Activated CD4-positive, alpha-beta T cell treated with anti-CD3 and anti-CD28 coated beads for 36 hours (primary cell): ENCODE measurements at regions of chr2 and their contacts with region 1.

Region 1: GRCh38 chr2:113138428-113139322 is 11.3 kb downstream of the IL1RN start:
- DNase-seq: peak; percentile 56
- ATAC-seq: peak; percentile 82
- H3K4me3 Mint-ChIP-seq: no peak overlapping the region
- H3K27ac Mint-ChIP-seq: peak overlapping the region; percentile 71
- H3K4me1 Mint-ChIP-seq: peaks cover 24% of the 10 kb centered on the region
- H3K27me3 Mint-ChIP-seq: no peaks in the 10 kb centered on the region

Region 2: GRCh38 chr2:112757265-112757664 is 381.4 kb before region 1 on chr2:
- CTCF ChIA-PET with region 1: no interaction called
- POLR2A ChIA-PET with region 1: no interaction called
- intact Hi-C with region 1: no loop called
- DNase-seq: peak; percentile 9
- ATAC-seq: no peak
- H3K4me3 Mint-ChIP-seq: no peak overlapping the region
- H3K27ac Mint-ChIP-seq: no peak overlapping the region
- H3K4me1 Mint-ChIP-seq: peaks cover 4% of the 10 kb centered on the region
- H3K27me3 Mint-ChIP-seq: no peaks in the 10 kb centered on the region

Region 3: GRCh38 chr2:113116100-113116958 is 22.3 kb before region 1 on chr2:
- CTCF ChIA-PET with region 1: interaction called, 39 read pairs
- POLR2A ChIA-PET with region 1: no interaction called
- intact Hi-C with region 1: no loop called
- DNase-seq: peak; percentile 37
- ATAC-seq: peak; percentile 16
- H3K4me3 Mint-ChIP-seq: no peak overlapping the region
- H3K27ac Mint-ChIP-seq: peak overlapping the region; percentile 58
- H3K4me1 Mint-ChIP-seq: peaks cover 16% of the 10 kb centered on the region
- H3K27me3 Mint-ChIP-seq: peaks cover 2% of the 10 kb centered on the region

Region 4: DNA sequence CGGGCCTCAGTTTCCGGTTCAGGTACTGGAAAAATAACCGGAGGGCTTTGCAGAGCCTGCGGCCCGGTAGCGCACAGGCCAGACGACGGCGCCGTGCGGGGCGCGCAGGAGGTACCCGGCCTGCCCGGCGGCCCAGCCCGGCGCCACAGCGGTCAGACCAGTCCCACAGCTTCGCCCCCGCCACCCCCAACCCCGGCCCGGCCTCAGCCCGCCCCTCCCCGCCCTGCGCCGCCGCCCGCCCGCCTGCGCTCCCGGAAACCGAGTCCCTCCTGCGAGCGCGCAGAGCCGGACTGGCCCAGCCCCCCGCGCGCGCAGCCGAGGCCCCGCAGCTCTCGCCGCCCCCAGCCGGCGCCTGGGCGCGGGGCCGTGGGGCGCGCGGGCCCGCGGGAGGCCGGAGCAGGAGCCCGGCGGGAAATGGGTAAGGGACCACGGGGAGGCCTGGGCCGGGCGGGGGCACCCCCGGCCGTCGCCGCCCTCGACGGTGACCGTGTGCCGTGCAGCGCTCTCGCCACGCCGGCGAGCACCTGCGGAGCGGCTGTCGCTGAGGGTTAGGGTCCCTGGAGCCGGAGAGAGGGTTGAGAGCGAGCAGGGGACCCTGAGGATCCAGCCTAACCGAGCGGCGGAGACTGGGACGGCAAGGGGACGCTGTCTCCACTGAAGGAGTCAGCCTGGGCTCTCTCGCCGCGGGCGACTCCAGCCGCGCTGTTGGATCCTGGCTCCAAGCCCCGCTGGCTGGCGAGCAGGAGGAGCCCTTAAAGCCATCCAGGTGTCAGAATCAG is 18.6 kb after region 1 on chr2:
- CTCF ChIA-PET with region 1: interaction called, 79 read pairs
- POLR2A ChIA-PET with region 1: no interaction called
- intact Hi-C with region 1: loop called (anchors 1 to 2 kb)
- DNase-seq: peak; percentile 74
- ATAC-seq: peak; percentile 61
- H3K4me3 Mint-ChIP-seq: peak overlapping the region; percentile 82
- H3K27ac Mint-ChIP-seq: peak overlapping the region; percentile 90
- H3K4me1 Mint-ChIP-seq: peaks cover 22% of the 10 kb centered on the region
- H3K27me3 Mint-ChIP-seq: no peaks in the 10 kb centered on the region

Region 5: DNA sequence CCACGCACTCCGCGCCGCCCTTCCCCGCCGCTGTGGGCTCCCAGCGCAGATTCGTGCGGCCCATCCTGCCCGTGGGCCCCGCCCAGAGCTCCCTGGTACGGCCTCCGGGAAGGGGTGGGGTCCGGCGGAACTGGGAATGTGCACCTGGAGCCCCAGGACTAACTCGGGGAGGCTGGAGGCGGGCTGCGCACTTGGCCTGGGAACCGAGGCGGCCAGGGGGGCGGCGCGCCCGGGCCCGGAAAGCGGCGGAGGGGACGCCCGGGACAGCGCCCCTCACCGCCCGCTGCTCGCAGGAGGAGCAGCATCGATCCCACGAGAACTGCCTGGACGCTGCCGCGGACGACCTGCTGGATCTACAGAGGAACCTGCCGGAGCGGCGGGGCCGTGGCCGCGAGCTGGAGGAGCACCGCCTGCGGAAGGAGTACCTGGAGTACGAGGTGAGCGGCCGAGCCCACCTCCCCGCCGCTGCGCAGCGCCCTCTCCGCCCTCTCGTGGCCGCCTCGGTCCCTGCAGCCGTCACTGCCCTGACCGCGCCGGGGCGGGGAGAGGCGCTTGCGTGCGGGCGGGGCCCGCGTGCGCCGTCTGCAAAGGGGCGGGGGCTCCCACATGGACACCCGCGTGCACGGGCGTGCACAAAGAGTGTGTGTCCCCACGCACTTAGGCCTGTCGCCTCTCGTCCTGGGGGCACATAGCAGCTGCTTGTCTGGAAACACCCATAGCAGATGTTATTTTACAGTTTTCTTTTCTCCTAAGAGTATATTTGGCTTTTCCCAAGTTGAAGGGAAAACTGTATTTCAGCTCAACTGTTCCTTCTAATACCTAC is 60.3 kb after region 1 on chr2:
- CTCF ChIA-PET with region 1: interaction called, 62 read pairs
- POLR2A ChIA-PET with region 1: interaction called, 5 read pairs
- intact Hi-C with region 1: loop called (anchors 1 kb)
- DNase-seq: peak; percentile 88
- ATAC-seq: peak; percentile 70
- H3K4me3 Mint-ChIP-seq: no peak overlapping the region
- H3K27ac Mint-ChIP-seq: no peak overlapping the region
- H3K4me1 Mint-ChIP-seq: peaks cover 8% of the 10 kb centered on the region
- H3K27me3 Mint-ChIP-seq: no peaks in the 10 kb centered on the region

Region 6: GRCh38 chr2:113248997-113249770 is 110.5 kb after region 1 on chr2:
- CTCF ChIA-PET with region 1: interaction called, 14 read pairs
- POLR2A ChIA-PET with region 1: no interaction called
- intact Hi-C with region 1: loop called in 1 of 2 experiments (anchors 1 kb)
- DNase-seq: peak; percentile 88
- ATAC-seq: peak; percentile 77
- H3K4me3 Mint-ChIP-seq: no peak overlapping the region
- H3K27ac Mint-ChIP-seq: no peak overlapping the region
- H3K4me1 Mint-ChIP-seq: peaks cover 44% of the 10 kb centered on the region
- H3K27me3 Mint-ChIP-seq: no peaks in the 10 kb centered on the region

Region 7: GRCh38 chr2:113309655-113310387 is 171.1 kb after region 1 on chr2:
- CTCF ChIA-PET with region 1: no interaction called
- POLR2A ChIA-PET with region 1: no interaction called
- intact Hi-C with region 1: no loop called
- DNase-seq: no peak
- ATAC-seq: no peak
- H3K4me3 Mint-ChIP-seq: no peak overlapping the region
- H3K27ac Mint-ChIP-seq: no peak overlapping the region
- H3K4me1 Mint-ChIP-seq: peaks cover 1% of the 10 kb centered on the region
- H3K27me3 Mint-ChIP-seq: peaks cover 9% of the 10 kb centered on the region